Mammary epithelial cell (primary cell): ENCODE measurements at regions of chr1 and their contacts with region 1.

Region 1: GRCh38 chr1:212488397-212489283 is 55.9 kb downstream of the NENF start:
- DNase-seq: peak; percentile 96
- H3K4me3 ChIP-seq: no peak overlapping the region
- H3K27ac ChIP-seq: peak overlapping the region; percentile 33
- H3K4me1 ChIP-seq: peaks cover 24% of the 10 kb centered on the region
- H3K27me3 ChIP-seq: no peaks in the 10 kb centered on the region
- CTCF ChIP-seq: no peak

Region 2: GRCh38 chr1:212437179-212437798 is 51.4 kb before region 1 on chr1:
- CTCF ChIA-PET with region 1: no interaction called
- dilution Hi-C with region 1: no loop called
- in situ Hi-C with region 1: no loop called
- intact Hi-C with region 1: no loop called
- DNase-seq: no peak
- H3K4me3 ChIP-seq: no peak overlapping the region
- H3K27ac ChIP-seq: no peak overlapping the region
- H3K4me1 ChIP-seq: peaks cover 6% of the 10 kb centered on the region
- H3K27me3 ChIP-seq: no peaks in the 10 kb centered on the region
- CTCF ChIP-seq: no peak

Region 3: DNA sequence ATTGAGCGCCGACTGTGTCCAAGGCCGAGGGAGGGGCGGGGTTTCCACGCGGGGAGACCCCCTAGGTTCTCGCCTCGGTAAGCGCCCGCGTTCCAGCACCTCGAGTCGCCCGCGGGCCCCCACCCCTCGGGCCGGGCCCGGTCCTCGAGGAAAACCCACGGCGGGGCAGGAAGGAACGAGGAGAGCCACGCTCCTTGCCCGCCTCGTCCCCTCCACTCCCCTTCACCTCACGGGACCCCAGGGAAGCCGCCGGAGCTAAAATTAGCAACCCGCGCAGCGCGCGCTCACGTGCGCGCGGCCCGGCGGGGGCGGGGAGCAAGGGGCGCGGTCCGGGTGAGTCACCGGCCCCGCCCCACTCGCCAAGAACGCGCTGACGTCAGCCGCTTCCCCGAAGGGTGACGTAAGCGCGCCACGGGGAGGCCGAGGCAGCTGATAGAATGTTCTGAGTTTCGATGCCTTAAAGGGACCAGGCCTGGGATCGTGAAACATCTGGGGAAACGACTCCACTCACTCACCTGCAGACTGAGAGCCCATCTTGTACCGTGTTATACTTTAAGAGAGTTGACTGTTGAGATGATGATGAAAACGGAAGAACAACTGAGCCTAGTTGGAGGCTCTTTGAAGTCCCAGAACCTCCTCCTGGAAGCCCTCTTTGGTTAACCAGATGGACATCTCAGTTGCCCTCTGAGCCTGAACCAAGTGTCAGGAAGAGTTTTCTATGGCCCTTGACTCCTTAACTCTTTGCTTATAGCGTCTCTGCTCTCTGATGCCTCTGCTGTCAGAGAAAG is 70.2 kb after region 1 on chr1:
- CTCF ChIA-PET with region 1: no interaction called
- dilution Hi-C with region 1: loop called (anchors 5 kb)
- in situ Hi-C with region 1: loop called in 1 of 2 experiments (anchors 5 kb)
- intact Hi-C with region 1: loop called (anchors 1 kb)
- DNase-seq: peak; percentile 93
- H3K4me3 ChIP-seq: peak overlapping the region; percentile 59 to 78 (median 59)
- H3K27ac ChIP-seq: peak overlapping the region; percentile 88
- H3K4me1 ChIP-seq: peaks cover 6% of the 10 kb centered on the region
- H3K27me3 ChIP-seq: no peaks in the 10 kb centered on the region
- CTCF ChIP-seq: no peak

Region 4: DNA sequence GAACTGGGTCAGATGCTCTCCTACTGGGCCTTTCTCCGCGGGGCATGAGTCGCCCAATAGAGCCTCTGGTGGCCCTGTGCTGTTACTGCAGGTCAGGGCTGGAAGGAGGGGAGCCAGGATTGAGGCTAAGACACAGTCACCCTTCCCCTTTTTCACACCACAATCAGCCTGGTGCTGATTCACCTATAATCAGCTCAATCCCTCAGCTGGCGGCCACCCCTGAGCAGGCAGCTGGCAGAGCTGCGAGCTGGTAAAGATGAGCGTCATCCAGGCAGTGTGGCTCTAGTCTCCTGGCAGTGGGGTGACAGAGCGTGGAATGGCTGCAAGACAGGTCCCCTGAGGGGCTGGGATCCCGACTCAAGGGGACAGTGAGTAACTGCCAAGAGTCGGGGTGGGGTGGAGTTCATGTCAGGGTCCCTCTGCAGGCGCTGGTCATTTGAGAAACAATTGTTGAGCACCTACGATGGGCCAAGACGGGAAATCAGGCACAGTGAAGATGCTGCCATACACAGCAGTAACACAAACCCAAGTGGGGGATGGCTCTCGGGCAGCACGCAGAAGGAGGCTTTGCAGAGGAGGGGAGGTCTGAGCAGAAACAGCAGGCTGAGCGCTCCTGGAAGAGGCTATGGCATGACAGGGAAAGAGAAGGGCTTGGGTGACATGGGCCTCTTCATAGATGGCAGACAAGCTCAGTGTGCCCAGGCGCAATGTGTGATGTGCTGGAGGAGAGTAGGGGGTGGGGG is 141.7 kb after region 1 on chr1:
- CTCF ChIA-PET with region 1: no interaction called
- dilution Hi-C with region 1: no loop called
- in situ Hi-C with region 1: no loop called
- intact Hi-C with region 1: no loop called
- DNase-seq: no peak
- H3K4me3 ChIP-seq: no peak overlapping the region
- H3K27ac ChIP-seq: no peak overlapping the region
- H3K4me1 ChIP-seq: no peaks in the 10 kb centered on the region
- H3K27me3 ChIP-seq: no peaks in the 10 kb centered on the region
- CTCF ChIP-seq: peak; percentile 77 to 82